CD4-positive, alpha-beta memory T cell (primary cell): ENCODE measurements at regions of chr9 and their contacts with region 1.

Region 1: DNA sequence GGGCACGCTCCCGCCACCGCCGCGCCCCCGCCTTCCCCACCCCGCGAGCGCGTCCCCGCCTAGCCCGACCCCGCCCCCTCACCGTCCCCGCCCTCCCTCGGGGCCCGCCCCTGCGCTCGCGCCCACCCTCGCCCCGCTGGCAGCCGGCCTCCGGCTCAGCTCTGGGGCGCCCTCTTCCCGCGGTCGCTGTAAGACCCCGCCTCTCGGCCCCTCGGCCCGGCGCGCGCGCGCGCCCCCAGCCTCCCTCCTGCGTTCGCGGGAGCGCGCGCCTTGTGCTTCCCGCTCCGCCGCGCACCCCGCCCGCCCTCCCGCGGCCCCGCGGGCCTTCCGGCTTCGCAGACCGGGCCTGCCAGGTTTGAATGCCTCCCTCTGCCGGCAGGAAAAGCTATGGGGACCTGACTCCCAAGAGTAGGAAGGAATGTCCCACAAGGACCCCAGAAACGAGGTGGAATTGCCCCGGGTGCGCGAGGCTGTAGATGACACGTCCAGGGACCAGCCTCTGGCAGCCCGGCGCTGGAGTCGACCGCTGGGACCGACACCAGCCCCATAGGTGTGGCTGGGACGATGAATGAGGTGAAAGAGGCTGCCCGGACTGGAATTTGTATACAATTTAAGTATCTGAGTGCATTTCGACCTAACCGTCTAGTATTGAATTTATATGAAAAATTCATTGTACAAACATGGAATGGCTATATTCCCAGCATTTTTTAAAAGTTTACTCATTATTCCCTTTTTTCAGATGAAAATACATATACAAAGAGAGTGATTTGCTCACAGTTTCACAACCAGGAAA is 416 bp upstream of the PTBP3 start:
- DNase-seq: peak; percentile 86 to 89 (median 87)
- H3K4me3 ChIP-seq: peak overlapping the region; percentile 31 to 81
- H3K4me3 Mint-ChIP-seq: peak overlapping the region; percentile 81 to 96 (median 94)
- H3K27ac ChIP-seq: peak overlapping the region; percentile 92
- H3K27ac Mint-ChIP-seq: peak overlapping the region; percentile 82 to 96 (median 92)
- H3K4me1 ChIP-seq: peaks cover 41% of the 10 kb centered on the region
- H3K4me1 Mint-ChIP-seq: peaks cover 23 to 45% (median 28%) of the 10 kb centered on the region in 4 donors
- H3K27me3 ChIP-seq: no peaks in the 10 kb centered on the region
- H3K27me3 Mint-ChIP-seq: no peaks in the 10 kb centered on the region

Region 2: GRCh38 chr9:111631071-111631971 is 702.5 kb before region 1 on chr9 and contains the start of gene DNAJC25:
- CTCF ChIA-PET with region 1: no interaction called
- POLR2A ChIA-PET with region 1: no interaction called
- intact Hi-C with region 1: loop called (anchors 2 kb)
- DNase-seq: peak; percentile 96 to 98 (median 98)
- H3K4me3 ChIP-seq: peak within 1 kb of the TSS; percentile 69 to 86
- H3K4me3 Mint-ChIP-seq: peak within 1 kb of the TSS; percentile 94 to 99 (median 98)
- H3K27ac ChIP-seq: peak within 1 kb of the TSS; percentile 76
- H3K27ac Mint-ChIP-seq: peak within 1 kb of the TSS; percentile 88 to 97 (median 94)
- H3K4me1 ChIP-seq: peaks cover 21% of the 10 kb centered on the region
- H3K4me1 Mint-ChIP-seq: peaks cover 35 to 52% (median 43%) of the 10 kb centered on the region in 4 donors
- H3K27me3 ChIP-seq: no peaks in the 10 kb centered on the region
- H3K27me3 Mint-ChIP-seq: peaks cover 0 to 1% of the 10 kb centered on the region in 2 donors
- total RNA-seq, gene DNAJC25: 5.1 to 5.6 TPM

Region 3: GRCh38 chr9:112174218-112174964 is 159.4 kb before region 1 on chr9:
- CTCF ChIA-PET with region 1: interaction called, 4 read pairs
- POLR2A ChIA-PET with region 1: interaction called, 45 read pairs
- intact Hi-C with region 1: loop called (anchors 1 kb)
- DNase-seq: peak; percentile 75 to 83 (median 80)
- H3K4me3 ChIP-seq: peak overlapping the region; percentile 54 to 68
- H3K4me3 Mint-ChIP-seq: peak overlapping the region; percentile 88 to 96 (median 91)
- H3K27ac ChIP-seq: peak overlapping the region; percentile 19
- H3K27ac Mint-ChIP-seq: peak overlapping the region; percentile 82 to 97 (median 95)
- H3K4me1 ChIP-seq: peaks cover 64% of the 10 kb centered on the region
- H3K4me1 Mint-ChIP-seq: peaks cover 49 to 88% (median 69%) of the 10 kb centered on the region in 4 donors
- H3K27me3 ChIP-seq: no peaks in the 10 kb centered on the region
- H3K27me3 Mint-ChIP-seq: no peaks in the 10 kb centered on the region

Region 4: DNA sequence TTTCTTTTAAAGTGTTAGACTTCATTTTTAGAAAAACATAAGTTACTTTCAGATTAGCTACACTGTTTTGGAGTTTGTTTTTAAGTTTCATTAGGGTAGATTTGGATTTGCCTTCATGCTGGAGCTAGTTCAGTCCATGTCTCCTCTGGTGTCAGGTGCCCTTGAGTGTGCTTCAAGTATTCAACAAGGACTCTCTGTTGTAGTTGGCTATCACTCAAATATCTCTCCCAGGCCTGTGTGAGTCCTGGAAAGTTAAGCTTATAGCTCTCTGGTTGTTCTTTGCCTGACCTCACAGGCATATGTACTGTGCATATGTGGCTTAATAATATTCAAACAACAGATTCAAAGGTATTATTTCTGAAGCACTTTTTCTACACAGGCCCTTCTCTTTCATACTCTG is 45.8 kb before region 1 on chr9:
- CTCF ChIA-PET with region 1: no interaction called
- POLR2A ChIA-PET with region 1: interaction called, 4 read pairs
- intact Hi-C with region 1: loop called (anchors 5 kb)
- DNase-seq: no peak
- H3K4me3 ChIP-seq: no peak overlapping the region
- H3K4me3 Mint-ChIP-seq: no peak overlapping the region
- H3K27ac ChIP-seq: no peak overlapping the region
- H3K27ac Mint-ChIP-seq: peak overlapping the region in 1 of 7 donors; percentile 87
- H3K4me1 ChIP-seq: peaks cover 7% of the 10 kb centered on the region
- H3K4me1 Mint-ChIP-seq: peaks cover 15 to 43% (median 38%) of the 10 kb centered on the region in 4 donors
- H3K27me3 ChIP-seq: no peaks in the 10 kb centered on the region
- H3K27me3 Mint-ChIP-seq: no peaks in the 10 kb centered on the region

Region 5: DNA sequence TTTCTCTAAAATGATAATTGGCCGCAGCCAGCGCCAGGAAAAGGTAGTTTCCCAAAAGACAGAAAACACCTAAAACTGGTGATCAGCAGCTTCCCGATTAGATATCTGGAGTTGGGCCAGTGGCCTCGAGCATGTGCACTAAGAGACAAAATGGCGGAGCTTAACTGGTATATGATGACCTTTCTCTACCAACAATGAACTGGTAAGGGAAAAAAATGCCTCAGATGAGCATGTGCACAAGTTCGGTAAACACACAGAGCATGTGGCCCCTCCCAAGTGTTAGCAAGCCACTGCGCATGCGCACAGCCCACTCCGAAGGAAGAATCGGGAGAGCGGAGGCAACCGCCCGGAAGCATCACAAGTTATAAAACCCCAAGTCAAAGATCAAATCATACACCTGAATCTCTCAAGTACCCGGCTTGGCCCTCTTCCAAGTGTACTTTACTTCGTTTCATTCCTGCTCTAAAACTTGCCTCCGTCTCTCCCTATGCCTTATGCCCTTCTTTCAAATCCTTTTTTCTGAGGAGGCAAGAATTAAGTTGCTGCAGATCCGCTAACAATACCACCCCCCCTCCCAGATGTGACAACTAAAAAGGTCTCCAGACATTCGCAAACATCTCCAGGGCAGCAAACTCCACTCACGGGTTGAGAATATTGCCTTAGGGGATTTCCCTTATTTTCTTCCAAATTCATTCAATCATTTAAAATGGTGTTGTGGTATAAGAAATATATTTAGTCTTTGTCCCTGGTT is 14.6 kb after region 1 on chr9:
- CTCF ChIA-PET with region 1: interaction called, 3 read pairs
- POLR2A ChIA-PET with region 1: interaction called, 8 read pairs
- intact Hi-C with region 1: loop called (anchors 1 kb)
- DNase-seq: peak; percentile 61 to 72 (median 65)
- H3K4me3 ChIP-seq: peak overlapping the region in 1 of 2 donors; percentile 51
- H3K4me3 Mint-ChIP-seq: peak overlapping the region; percentile 52 to 85 (median 78)
- H3K27ac ChIP-seq: no peak overlapping the region
- H3K27ac Mint-ChIP-seq: peak overlapping the region in 4 of 7 donors; percentile 67 to 83 (median 79)
- H3K4me1 ChIP-seq: peaks cover 11% of the 10 kb centered on the region
- H3K4me1 Mint-ChIP-seq: peaks cover 5 to 14% (median 9%) of the 10 kb centered on the region in 4 donors
- H3K27me3 ChIP-seq: no peaks in the 10 kb centered on the region
- H3K27me3 Mint-ChIP-seq: peaks cover 2 to 3% of the 10 kb centered on the region in 2 donors

Region 6: GRCh38 chr9:112486221-112487007 is 152.6 kb after region 1 on chr9 and contains the start of gene KIAA1958:
- CTCF ChIA-PET with region 1: no interaction called
- POLR2A ChIA-PET with region 1: interaction called, 5 read pairs
- intact Hi-C with region 1: loop called (anchors 2 kb)
- DNase-seq: peak; percentile 65 to 76 (median 72)
- H3K4me3 ChIP-seq: peak within 1 kb of the TSS; percentile 77 to 78
- H3K4me3 Mint-ChIP-seq: peak within 1 kb of the TSS; percentile 93 to 99 (median 96)
- H3K27ac ChIP-seq: peak within 1 kb of the TSS; percentile 42
- H3K27ac Mint-ChIP-seq: peak within 1 kb of the TSS; percentile 79 to 95 (median 92)
- H3K4me1 ChIP-seq: peaks cover 8% of the 10 kb centered on the region
- H3K4me1 Mint-ChIP-seq: peaks cover 9 to 28% (median 16%) of the 10 kb centered on the region in 4 donors
- H3K27me3 ChIP-seq: no peaks in the 10 kb centered on the region
- H3K27me3 Mint-ChIP-seq: no peaks in the 10 kb centered on the region
- total RNA-seq, gene KIAA1958: 4.3 to 5.1 TPM